HepG2 (cell line): ENCODE measurements at regions of chr1 and their contacts with region 1.

Region 1: DNA sequence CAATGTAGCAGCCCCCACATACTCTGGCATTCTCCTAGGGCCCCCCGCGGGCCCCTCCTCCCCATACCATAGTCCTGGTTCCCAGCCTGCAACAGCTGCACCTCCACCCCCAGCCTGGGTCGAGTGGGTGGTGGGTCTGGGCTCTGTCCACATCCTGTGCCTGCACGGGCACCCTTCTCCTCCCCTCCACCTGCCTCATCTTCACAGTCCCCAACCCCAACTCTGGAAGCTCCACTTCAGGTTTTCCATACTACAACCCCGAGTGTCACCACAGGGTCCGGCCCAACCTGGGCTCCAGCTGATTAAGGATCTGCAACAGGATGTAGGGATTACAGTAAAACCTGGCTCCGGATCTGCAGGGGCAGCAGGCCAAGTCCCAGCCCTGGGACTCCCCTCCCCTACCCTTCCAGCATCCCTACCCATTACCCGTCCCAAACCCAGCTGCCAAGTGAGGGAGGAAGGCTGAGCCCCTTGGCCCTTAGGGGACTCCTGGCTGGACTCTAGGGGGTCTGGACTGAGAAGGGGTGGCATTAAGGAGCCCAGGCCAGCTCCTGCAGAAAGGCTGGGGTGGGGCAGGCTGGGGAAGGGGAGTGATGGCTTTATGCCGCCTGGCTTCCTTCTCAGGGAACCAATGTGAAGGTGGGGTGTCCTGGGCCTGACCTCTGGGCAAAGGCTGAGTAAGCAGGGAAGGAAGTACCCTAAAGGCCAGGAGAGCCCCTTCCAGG is 116.8 kb downstream of the CASZ1 start:
- DNase-seq: peak; percentile 82
- ATAC-seq: peak; percentile 67
- H3K4me3 ChIP-seq: peak overlapping the region in 2 of 3 experiments; percentile 5 to 35; a peak in 2 of 6 replicates
- H3K27ac ChIP-seq: no peak overlapping the region
- H3K4me1 ChIP-seq: peaks cover 85% of the 10 kb centered on the region
- H3K27me3 ChIP-seq: no peaks in the 10 kb centered on the region
- CTCF ChIP-seq: no peak
- EP300 ChIP-seq: no peak
- POLR2A ChIP-seq: no peak
- RAD21 ChIP-seq: no peak

Region 2: DNA sequence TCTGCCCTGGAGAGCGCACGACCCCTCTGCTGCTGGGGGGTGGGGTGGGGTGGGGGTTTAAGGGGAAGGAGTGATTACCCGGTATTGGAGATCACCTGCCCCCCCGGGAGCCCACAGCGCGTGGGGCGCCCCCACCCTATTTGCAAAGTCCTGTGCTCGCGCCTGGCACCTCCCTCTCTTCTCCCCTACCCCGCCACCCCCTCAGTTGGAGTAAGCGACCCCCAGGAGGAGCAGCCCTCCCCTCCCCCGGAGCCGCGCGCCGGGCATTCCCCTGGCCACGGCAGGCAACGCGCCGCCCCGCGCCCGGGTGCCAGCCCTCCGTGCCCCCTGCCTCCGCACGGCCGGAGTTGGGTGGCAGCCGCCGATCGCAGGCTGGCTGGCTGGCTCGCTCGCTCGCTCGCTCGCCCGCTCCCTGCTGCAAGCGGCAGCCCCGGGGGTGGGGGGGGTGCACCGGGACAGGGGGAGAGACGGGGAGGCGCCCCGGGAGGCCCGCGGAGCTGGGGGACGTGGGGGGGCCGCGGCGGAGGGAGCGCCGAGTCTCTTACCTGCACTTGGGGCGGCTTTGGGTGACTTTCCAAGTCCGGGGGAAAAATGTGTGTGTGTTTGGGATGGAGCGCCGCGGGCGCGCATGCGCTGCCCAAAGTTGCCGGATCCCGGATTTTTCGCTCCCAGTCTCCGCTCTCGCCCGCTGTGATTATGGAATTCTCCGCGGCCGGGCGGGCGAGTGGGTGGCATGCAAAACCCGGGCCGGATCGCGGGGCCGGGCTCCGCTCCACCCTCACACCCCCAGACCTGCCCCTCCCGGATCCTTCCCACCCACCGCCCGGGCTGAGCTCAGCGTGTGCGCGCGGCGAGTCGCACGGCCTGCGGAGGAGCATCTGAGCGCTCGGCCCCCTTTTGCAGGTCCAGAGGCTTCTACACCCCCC is 116.6 kb after region 1 on chr1 and contains the start of gene CASZ1:
- CTCF ChIA-PET with region 1: no interaction called
- POLR2A ChIA-PET with region 1: no interaction called
- in situ Hi-C with region 1: loop called (anchors 5 kb)
- intact Hi-C with region 1: loop called (anchors 5 kb)
- DNase-seq: peak; percentile 62
- ATAC-seq: peak; percentile 65
- H3K4me3 ChIP-seq: peak within 1 kb of the TSS; percentile 59 to 68 (median 64); a peak in 5 of 6 replicates
- H3K27ac ChIP-seq: no peak within 1 kb of the TSS
- H3K4me1 ChIP-seq: peaks cover 21% of the 10 kb centered on the region
- H3K27me3 ChIP-seq: peaks cover 5 to 52% of the 10 kb centered on the region in 2 experiments; a peak in 4 of 5 replicates
- CTCF ChIP-seq: no peak
- EP300 ChIP-seq: 0 out of 4 replicates have a peak, but pooled peaks of 1 of the 2 experiments have one; percentile 24
- POLR2A ChIP-seq: no peak
- RAD21 ChIP-seq: 0 out of 2 replicates have a peak, but pooled peaks have one; percentile 16
- total RNA-seq, gene CASZ1: 2.3 and 3.7 TPM in 2 replicates

Region 3: GRCh38 chr1:11384170-11384554 is 704.5 kb after region 1 on chr1:
- CTCF ChIA-PET with region 1: no interaction called
- POLR2A ChIA-PET with region 1: no interaction called
- in situ Hi-C with region 1: no loop called
- intact Hi-C with region 1: no loop called
- DNase-seq: no peak
- ATAC-seq: no peak
- H3K4me3 ChIP-seq: no peak overlapping the region
- H3K27ac ChIP-seq: no peak overlapping the region
- H3K4me1 ChIP-seq: peaks cover 8% of the 10 kb centered on the region; the same call in 1 of the 2 replicates
- H3K27me3 ChIP-seq: peaks cover 0 to 62% of the 10 kb centered on the region in 2 experiments; a peak in 4 of 5 replicates
- CTCF ChIP-seq: no peak
- EP300 ChIP-seq: no peak
- POLR2A ChIP-seq: no peak
- RAD21 ChIP-seq: no peak